HEK293 (cell line): ENCODE measurements at regions of chr5 and their contacts with region 1.

Region 1: DNA sequence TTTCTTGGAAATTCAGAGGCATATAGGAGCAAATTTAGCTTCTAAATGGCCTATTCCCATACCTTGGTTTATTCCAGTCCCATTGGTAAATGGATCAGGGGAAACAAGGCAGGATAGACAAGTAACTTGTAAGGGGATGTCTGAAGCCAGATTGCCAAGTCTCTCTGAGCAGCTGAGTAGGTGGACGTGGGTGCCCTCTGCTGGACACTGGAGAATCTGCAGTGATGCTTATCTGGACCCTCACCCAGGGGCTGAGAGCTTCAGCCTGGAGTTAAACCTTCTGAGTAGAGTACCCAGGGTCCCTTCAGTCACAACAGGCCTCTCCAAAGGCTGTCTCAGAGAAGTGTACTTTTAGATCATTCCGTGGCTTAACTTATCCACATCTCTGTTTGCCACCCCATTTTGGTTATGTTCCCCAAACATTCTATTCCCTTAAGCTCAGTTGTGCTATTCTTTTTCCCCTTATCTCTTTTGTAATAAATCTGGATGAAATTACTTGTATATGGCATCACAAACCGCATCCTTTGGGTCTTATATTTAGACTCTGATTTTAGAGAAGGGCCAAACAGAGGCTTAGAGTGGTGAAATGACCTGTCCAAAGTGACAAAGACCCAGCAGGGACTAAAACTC is 218.3 kb upstream of the GLRA1 start:
- H3K4me3 ChIP-seq: no peak overlapping the region
- H3K27ac ChIP-seq: no peak overlapping the region
- H3K4me1 ChIP-seq: peaks cover 3% of the 10 kb centered on the region
- CTCF ChIP-seq: peak; percentile 63; the same call in 1 of the 2 replicates

Region 2: GRCh38 chr5:152124409-152125041 is 18.4 kb before region 1 on chr5:
- CTCF ChIA-PET with region 1: interaction called, 15 read pairs
- POLR2A ChIA-PET with region 1: no interaction called
- H3K4me3 ChIP-seq: no peak overlapping the region
- H3K27ac ChIP-seq: no peak overlapping the region
- H3K4me1 ChIP-seq: no peaks in the 10 kb centered on the region
- CTCF ChIP-seq: no peak

Region 3: GRCh38 chr5:152237531-152237930 is 94.6 kb after region 1 on chr5:
- CTCF ChIA-PET with region 1: no interaction called
- POLR2A ChIA-PET with region 1: no interaction called
- H3K4me3 ChIP-seq: no peak overlapping the region
- H3K27ac ChIP-seq: no peak overlapping the region
- H3K4me1 ChIP-seq: no peaks in the 10 kb centered on the region
- CTCF ChIP-seq: no peak